K562 (cell line): ENCODE measurements at regions of chr1 and their contacts with region 1.

Region 1: DNA sequence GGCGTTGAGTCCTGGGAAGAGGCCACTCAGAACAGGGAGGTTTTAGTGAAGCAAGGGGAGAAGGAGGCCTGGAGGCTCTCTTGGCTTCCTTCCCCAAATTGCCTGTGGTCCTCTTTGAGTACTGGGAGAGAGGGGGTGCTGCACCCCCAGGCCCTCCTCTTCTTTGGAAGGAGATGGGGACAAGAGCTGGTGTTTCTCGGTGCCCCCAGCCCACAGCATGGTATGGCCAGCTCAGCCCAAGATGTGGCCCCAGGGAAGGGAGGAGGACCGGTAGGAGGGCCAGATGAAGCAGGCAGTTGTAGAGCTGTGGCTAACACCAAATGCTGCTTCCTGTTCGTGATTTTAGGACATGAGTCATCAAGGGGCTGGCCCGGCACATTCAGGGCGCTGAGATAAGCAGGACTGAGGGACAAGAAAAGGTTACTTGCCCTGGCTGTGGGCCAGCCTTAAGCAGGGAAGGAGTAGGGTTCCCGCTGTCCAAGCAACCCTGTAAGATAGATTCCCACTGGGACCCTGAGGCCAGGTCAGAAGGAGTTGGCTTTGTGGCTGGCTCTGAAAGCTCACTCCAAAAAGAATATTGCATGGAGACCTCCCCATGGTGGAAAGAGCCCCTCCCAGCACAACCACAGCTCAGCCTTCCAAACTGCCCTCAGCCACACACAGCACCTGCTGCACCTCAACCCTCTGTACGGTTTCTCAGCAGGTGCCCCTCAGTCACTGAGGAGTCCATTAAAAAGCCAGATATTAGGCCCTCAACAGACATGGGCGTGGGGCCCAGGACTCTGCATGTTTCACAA is 4.9 kb upstream of the TNFRSF1B start:
- DNase-seq: peak; percentile 93 to 99 (median 96)
- ATAC-seq: peak; percentile 95
- H3K4me3 ChIP-seq: no peak overlapping the region
- H3K27ac ChIP-seq: peak overlapping the region; percentile 67; the same call in 2 of the 3 replicates
- H3K4me1 ChIP-seq: peaks cover 22 to 26% of the 10 kb centered on the region in 2 experiments
- H3K27me3 ChIP-seq: no peaks in the 10 kb centered on the region
- CTCF ChIP-seq: no peak
- EP300 ChIP-seq: peak; percentile 93
- POLR2A ChIP-seq: no peak
- RAD21 ChIP-seq: no peak; a peak in 1 of 4 replicates

Region 2: DNA sequence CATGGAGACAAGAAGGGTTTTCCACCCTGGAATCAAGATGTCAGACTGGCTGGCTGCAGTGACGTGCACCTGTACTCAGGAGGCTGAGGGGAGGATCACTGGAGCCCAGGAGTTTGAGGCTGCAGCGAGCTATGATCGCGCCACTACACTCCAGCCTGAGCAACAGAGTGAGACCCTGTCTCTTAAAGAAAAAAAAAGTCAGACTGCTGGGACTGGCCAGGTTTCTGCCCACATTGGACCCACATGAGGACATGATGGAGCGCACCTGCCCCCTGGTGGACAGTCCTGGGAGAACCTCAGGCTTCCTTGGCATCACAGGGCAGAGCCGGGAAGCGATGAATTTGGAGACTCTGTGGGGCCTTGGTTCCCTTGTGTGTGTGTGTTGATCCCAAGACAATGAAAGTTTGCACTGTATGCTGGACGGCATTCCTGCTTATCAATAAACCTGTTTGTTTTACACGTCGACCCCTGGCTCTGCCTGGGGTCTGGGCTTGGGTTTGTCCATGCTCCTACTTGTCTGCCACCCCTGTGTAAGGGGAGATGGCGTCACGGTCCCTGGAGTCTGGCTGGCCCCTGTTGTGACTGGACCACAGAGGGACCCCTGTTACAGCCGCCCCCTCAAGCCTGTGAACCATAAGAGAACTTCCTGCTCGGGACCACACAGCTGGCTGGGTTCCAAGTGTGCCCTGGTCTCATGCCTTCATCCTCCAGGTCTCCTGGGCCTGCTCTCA is 47.1 kb after region 1 on chr1:
- CTCF ChIA-PET with region 1: no interaction called
- POLR2A ChIA-PET with region 1: no interaction called
- in situ Hi-C with region 1: no loop called
- intact Hi-C with region 1: loop called (anchors 5 kb)
- DNase-seq: peak; percentile 85 to 90 (median 87)
- ATAC-seq: peak; percentile 91
- H3K4me3 ChIP-seq: no peak overlapping the region
- H3K27ac ChIP-seq: no peak overlapping the region
- H3K4me1 ChIP-seq: peaks cover 3 to 17% of the 10 kb centered on the region in 2 experiments; a peak in 4 of 5 replicates
- H3K27me3 ChIP-seq: no peaks in the 10 kb centered on the region
- CTCF ChIP-seq: peak; percentile 94 to 97 (median 96)
- EP300 ChIP-seq: no peak; the same call in 1 of the 2 replicates
- POLR2A ChIP-seq: peak; percentile 66; the same call in 1 of the 2 replicates
- RAD21 ChIP-seq: peak; percentile 98 to 99

Region 3: GRCh38 chr1:12275369-12275768 is 113.5 kb after region 1 on chr1:
- CTCF ChIA-PET with region 1: no interaction called
- POLR2A ChIA-PET with region 1: no interaction called
- in situ Hi-C with region 1: no loop called
- intact Hi-C with region 1: no loop called
- DNase-seq: peak; percentile 60 to 67 (median 65)
- ATAC-seq: peak; percentile 88
- H3K4me3 ChIP-seq: no peak overlapping the region
- H3K27ac ChIP-seq: no peak overlapping the region
- H3K4me1 ChIP-seq: no peaks in the 10 kb centered on the region
- H3K27me3 ChIP-seq: no peaks in the 10 kb centered on the region; a peak in 1 of 5 replicates
- CTCF ChIP-seq: peak; percentile 81 to 89 (median 86)
- EP300 ChIP-seq: no peak
- POLR2A ChIP-seq: no peak
- RAD21 ChIP-seq: peak; percentile 21 to 59